B cell (primary cell): ENCODE measurements at regions of chr2 and their contacts with region 1.

Region 1: GRCh38 chr2:202609381-202610145 is 25.2 kb upstream of the FAM117B start:
- DNase-seq: peak; percentile 48
- ATAC-seq: peak; percentile 74
- H3K4me3 ChIP-seq: peak overlapping the region in 2 of 5 experiments; percentile 3 to 45
- H3K4me3 Mint-ChIP-seq: peak overlapping the region; percentile 58
- H3K27ac ChIP-seq: peak overlapping the region; percentile 58 to 79
- H3K27ac Mint-ChIP-seq: peak overlapping the region; percentile 90
- H3K4me1 ChIP-seq: peaks cover 30 to 32% of the 10 kb centered on the region in 2 donors
- H3K4me1 Mint-ChIP-seq: peaks cover 35% of the 10 kb centered on the region
- H3K27me3 ChIP-seq: no peaks in the 10 kb centered on the region
- H3K27me3 Mint-ChIP-seq: no peaks in the 10 kb centered on the region
- CTCF ChIP-seq: no peak

Region 2: GRCh38 chr2:202450785-202451184 is 158.8 kb before region 1 on chr2:
- CTCF ChIA-PET with region 1: no interaction called
- POLR2A ChIA-PET with region 1: no interaction called
- intact Hi-C with region 1: no loop called
- DNase-seq: no peak
- ATAC-seq: no peak
- H3K4me3 ChIP-seq: no peak overlapping the region
- H3K4me3 Mint-ChIP-seq: no peak overlapping the region
- H3K27ac ChIP-seq: no peak overlapping the region
- H3K27ac Mint-ChIP-seq: no peak overlapping the region
- H3K4me1 ChIP-seq: no peaks in the 10 kb centered on the region
- H3K4me1 Mint-ChIP-seq: peaks cover 4% of the 10 kb centered on the region
- H3K27me3 ChIP-seq: no peaks in the 10 kb centered on the region
- H3K27me3 Mint-ChIP-seq: no peaks in the 10 kb centered on the region
- CTCF ChIP-seq: no peak

Region 3: GRCh38 chr2:202624133-202624532 is 14.6 kb after region 1 on chr2:
- CTCF ChIA-PET with region 1: interaction called, 4 read pairs
- POLR2A ChIA-PET with region 1: no interaction called
- intact Hi-C with region 1: loop called (anchors 2 kb)
- DNase-seq: no peak
- ATAC-seq: no peak
- H3K4me3 ChIP-seq: no peak overlapping the region
- H3K4me3 Mint-ChIP-seq: no peak overlapping the region
- H3K27ac ChIP-seq: no peak overlapping the region
- H3K27ac Mint-ChIP-seq: peak overlapping the region; percentile 32
- H3K4me1 ChIP-seq: peaks cover 43 to 45% of the 10 kb centered on the region in 2 donors
- H3K4me1 Mint-ChIP-seq: peaks cover 19% of the 10 kb centered on the region
- H3K27me3 ChIP-seq: no peaks in the 10 kb centered on the region
- H3K27me3 Mint-ChIP-seq: no peaks in the 10 kb centered on the region
- CTCF ChIP-seq: no peak

Region 4: DNA sequence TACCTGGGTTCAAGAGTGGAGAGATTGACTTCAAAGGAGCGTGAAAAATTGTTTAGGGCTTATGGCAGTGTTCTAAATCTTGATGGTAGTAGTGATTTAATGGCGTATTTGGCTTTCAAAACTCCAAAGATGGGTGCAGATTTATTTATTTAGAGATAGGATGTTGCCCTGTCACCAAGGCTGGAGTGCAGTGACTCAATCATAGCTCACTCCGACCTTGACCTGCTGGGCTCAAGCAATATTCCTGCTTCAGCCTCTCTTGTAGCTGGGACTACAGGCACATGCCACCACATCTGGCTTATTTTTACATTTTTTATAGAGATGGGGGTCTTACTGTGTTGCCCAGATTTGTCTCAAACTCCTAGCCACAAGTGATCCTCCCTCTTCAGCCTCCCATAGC is 77.7 kb after region 1 on chr2:
- CTCF ChIA-PET with region 1: no interaction called
- POLR2A ChIA-PET with region 1: no interaction called
- intact Hi-C with region 1: loop called (anchors 5 kb)
- DNase-seq: no peak
- ATAC-seq: no peak
- H3K4me3 ChIP-seq: no peak overlapping the region
- H3K4me3 Mint-ChIP-seq: no peak overlapping the region
- H3K27ac ChIP-seq: peak overlapping the region in 1 of 2 donors; percentile 21
- H3K27ac Mint-ChIP-seq: peak overlapping the region; percentile 17
- H3K4me1 ChIP-seq: peaks cover 0 to 11% of the 10 kb centered on the region in 2 donors
- H3K4me1 Mint-ChIP-seq: peaks cover 47% of the 10 kb centered on the region
- H3K27me3 ChIP-seq: no peaks in the 10 kb centered on the region
- H3K27me3 Mint-ChIP-seq: no peaks in the 10 kb centered on the region
- CTCF ChIP-seq: no peak